ENCODE measurements at regions of chr15 and their contacts with region 1.

Region 1: GRCh38 chr15:94324117-94324826 is 92.9 kb downstream of the MCTP2 start:
- DNase-seq: no peak
- H3K4me3 ChIP-seq: no peak overlapping the region
- CTCF ChIP-seq: peak; percentile 68

Region 2: GRCh38 chr15:94125156-94125555 is 199.1 kb before region 1 on chr15:
- CTCF ChIA-PET with region 1: interaction called, 12 read pairs
- POLR2A ChIA-PET with region 1: no interaction called
- DNase-seq: peak; percentile 7
- H3K4me3 ChIP-seq: no peak overlapping the region
- CTCF ChIP-seq: no peak

Region 3: GRCh38 chr15:94174399-94174802 is 149.9 kb before region 1 on chr15:
- CTCF ChIA-PET with region 1: interaction called, 29 read pairs
- POLR2A ChIA-PET with region 1: no interaction called
- DNase-seq: peak; percentile 49
- H3K4me3 ChIP-seq: no peak overlapping the region
- CTCF ChIP-seq: no peak

Region 4: GRCh38 chr15:94272251-94272898 is 51.9 kb before region 1 on chr15:
- CTCF ChIA-PET with region 1: no interaction called
- POLR2A ChIA-PET with region 1: no interaction called
- DNase-seq: no peak
- H3K4me3 ChIP-seq: no peak overlapping the region
- CTCF ChIP-seq: no peak

Region 5: GRCh38 chr15:94306700-94307650 is 17.3 kb before region 1 on chr15:
- CTCF ChIA-PET with region 1: interaction called, 12 read pairs
- POLR2A ChIA-PET with region 1: no interaction called
- DNase-seq: no peak
- H3K4me3 ChIP-seq: no peak overlapping the region
- CTCF ChIP-seq: no peak

Region 6: GRCh38 chr15:94451466-94451865 is 127.2 kb after region 1 on chr15:
- CTCF ChIA-PET with region 1: no interaction called
- POLR2A ChIA-PET with region 1: no interaction called
- DNase-seq: no peak
- H3K4me3 ChIP-seq: no peak overlapping the region
- CTCF ChIP-seq: no peak